SK-N-SH (cell line): ENCODE measurements at regions of chr16 and their contacts with region 1.

Region 1: GRCh38 chr16:68860978-68861892 is 17.9 kb downstream of the TANGO6 start:
- DNase-seq: no peak
- H3K4me3 ChIP-seq: no peak overlapping the region
- H3K27ac ChIP-seq: no peak overlapping the region
- H3K4me1 ChIP-seq: no peaks in the 10 kb centered on the region
- H3K27me3 ChIP-seq: no peaks in the 10 kb centered on the region
- CTCF ChIP-seq: no peak
- EP300 ChIP-seq: no peak
- RAD21 ChIP-seq: no peak

Region 2: GRCh38 chr16:68843482-68844210 is 17.6 kb before region 1 on chr16 and contains the start of gene TANGO6:
- CTCF ChIA-PET with region 1: interaction called, 14 read pairs
- POLR2A ChIA-PET with region 1: no interaction called
- DNase-seq: peak; percentile 89
- H3K4me3 ChIP-seq: peak within 1 kb of the TSS; percentile 69 to 82
- H3K27ac ChIP-seq: peak within 1 kb of the TSS; percentile 69 to 88
- H3K4me1 ChIP-seq: peaks cover 0 to 3% of the 10 kb centered on the region in 2 experiments; a peak in 2 of 4 replicates
- H3K27me3 ChIP-seq: no peaks in the 10 kb centered on the region
- CTCF ChIP-seq: peak; percentile 52
- EP300 ChIP-seq: no peak
- RAD21 ChIP-seq: peak; percentile 45
- polyA plus RNA-seq, gene TANGO6: 5.5 and 6.5 TPM in 2 replicates